ENCODE measurements at regions of chr17 and their contacts with region 1.

Region 1: GRCh38 chr17:58006924-58007780 is at the start of gene SRSF1:
- DNase-seq: peak; percentile 99
- H3K4me3 Mint-ChIP-seq: peak within 1 kb of the TSS; percentile 99
- H3K27ac Mint-ChIP-seq: peak within 1 kb of the TSS; percentile 100
- H3K4me1 Mint-ChIP-seq: peaks cover 39% of the 10 kb centered on the region
- H3K27me3 Mint-ChIP-seq: no peaks in the 10 kb centered on the region
- total RNA-seq, gene SRSF1: 248 to 257 TPM

Region 2: GRCh38 chr17:57084802-57085447 is 922.2 kb before region 1 on chr17 and contains the start of gene AKAP1:
- CTCF ChIA-PET with region 1: no interaction called
- intact Hi-C with region 1: loop called (anchors 10 kb)
- DNase-seq: peak; percentile 95
- H3K4me3 Mint-ChIP-seq: peak within 1 kb of the TSS; percentile 83
- H3K27ac Mint-ChIP-seq: peak within 1 kb of the TSS; percentile 81
- H3K4me1 Mint-ChIP-seq: peaks cover 43% of the 10 kb centered on the region
- H3K27me3 Mint-ChIP-seq: no peaks in the 10 kb centered on the region
- total RNA-seq, gene AKAP1: 17.6 to 23.1 TPM

Region 3: GRCh38 chr17:57849874-57850754 is 157.0 kb before region 1 on chr17 and contains the start of gene MRPS23:
- CTCF ChIA-PET with region 1: interaction called, 3 read pairs
- intact Hi-C with region 1: loop called (anchors 1 kb)
- DNase-seq: peak; percentile 98
- H3K4me3 Mint-ChIP-seq: peak within 1 kb of the TSS; percentile 91
- H3K27ac Mint-ChIP-seq: peak within 1 kb of the TSS; percentile 95
- H3K4me1 Mint-ChIP-seq: peaks cover 28% of the 10 kb centered on the region
- H3K27me3 Mint-ChIP-seq: no peaks in the 10 kb centered on the region
- total RNA-seq, gene MRPS23: 57.5 to 59.1 TPM

Region 4: GRCh38 chr17:58032691-58033415 is 25.7 kb after region 1 on chr17:
- CTCF ChIA-PET with region 1: no interaction called
- intact Hi-C with region 1: no loop called
- DNase-seq: no peak
- H3K4me3 Mint-ChIP-seq: no peak overlapping the region
- H3K27ac Mint-ChIP-seq: no peak overlapping the region
- H3K4me1 Mint-ChIP-seq: no peaks in the 10 kb centered on the region
- H3K27me3 Mint-ChIP-seq: peaks cover 2% of the 10 kb centered on the region

Region 5: GRCh38 chr17:58082870-58083490 is 75.8 kb after region 1 on chr17 and contains the start of gene DYNLL2:
- CTCF ChIA-PET with region 1: interaction called, 3 read pairs
- intact Hi-C with region 1: loop called (anchors 1 kb)
- DNase-seq: peak; percentile 94
- H3K4me3 Mint-ChIP-seq: peak within 1 kb of the TSS; percentile 77
- H3K27ac Mint-ChIP-seq: peak within 1 kb of the TSS; percentile 80
- H3K4me1 Mint-ChIP-seq: peaks cover 36% of the 10 kb centered on the region
- H3K27me3 Mint-ChIP-seq: no peaks in the 10 kb centered on the region
- total RNA-seq, gene DYNLL2: 19.1 to 19.4 TPM

Region 6: GRCh38 chr17:58219001-58219788 is 212.0 kb after region 1 on chr17 and contains the start of gene MKS1:
- CTCF ChIA-PET with region 1: no interaction called
- intact Hi-C with region 1: loop called (anchors 5 kb)
- DNase-seq: peak; percentile 97
- H3K4me3 Mint-ChIP-seq: peak within 1 kb of the TSS; percentile 82
- H3K27ac Mint-ChIP-seq: peak within 1 kb of the TSS; percentile 92
- H3K4me1 Mint-ChIP-seq: peaks cover 25% of the 10 kb centered on the region
- H3K27me3 Mint-ChIP-seq: no peaks in the 10 kb centered on the region
- total RNA-seq, gene MKS1: 27.1 to 29.2 TPM

Region 7: DNA sequence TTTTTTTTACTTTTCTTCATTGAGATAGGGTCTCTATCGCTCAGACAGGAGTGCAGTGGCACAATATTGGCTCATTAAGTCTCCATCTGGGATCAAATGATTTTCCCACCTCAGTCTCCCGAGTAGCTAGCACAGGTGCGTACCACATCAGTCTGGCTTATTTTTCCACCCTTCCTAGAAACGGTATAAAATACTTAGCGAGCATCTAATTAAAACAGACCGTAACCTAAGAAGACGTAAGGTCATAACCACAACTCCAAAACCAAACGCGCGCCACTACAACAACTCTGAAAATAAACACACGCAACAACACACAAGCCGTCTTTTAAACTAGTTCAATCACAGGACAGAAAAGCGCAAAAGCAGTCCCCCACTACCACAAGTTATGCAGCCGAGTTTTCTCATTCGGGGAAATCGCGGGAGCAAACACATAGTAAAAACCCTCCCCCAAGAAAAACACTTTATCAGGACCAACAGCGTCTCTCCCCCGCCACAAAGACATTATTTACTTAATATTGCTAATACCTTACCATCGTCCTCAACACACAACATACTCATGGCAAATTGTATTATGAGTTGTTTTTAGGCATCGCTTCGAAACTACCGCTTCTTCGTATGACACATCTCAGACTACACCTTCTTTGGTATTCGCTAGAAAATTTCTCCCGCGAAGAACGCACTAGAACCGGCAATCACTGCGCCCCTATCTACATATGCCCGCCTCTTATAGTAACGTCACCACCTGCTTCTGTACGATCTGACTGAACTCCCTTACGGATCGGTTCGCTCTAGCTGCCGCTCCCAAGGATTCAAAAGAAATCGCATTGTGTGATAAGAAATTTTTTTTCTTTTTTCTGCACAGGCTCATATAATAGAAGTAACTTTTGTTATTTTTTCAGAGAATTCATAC is 651.9 kb after region 1 on chr17:
- CTCF ChIA-PET with region 1: no interaction called
- intact Hi-C with region 1: loop called (anchors 2 kb)
- DNase-seq: peak; percentile 88
- H3K4me3 Mint-ChIP-seq: peak overlapping the region; percentile 69
- H3K27ac Mint-ChIP-seq: peak overlapping the region; percentile 98
- H3K4me1 Mint-ChIP-seq: peaks cover 16% of the 10 kb centered on the region
- H3K27me3 Mint-ChIP-seq: peaks cover 8% of the 10 kb centered on the region

Measured in activated naive CD4-positive, alpha-beta T cell treated with anti-CD3 and anti-CD28 coated beads for 36 hours (primary cell).